ENCODE measurements at regions of chr2 and their contacts with region 1.

Region 1: GRCh38 chr2:169925968-169926367 is 98.7 kb downstream of the UBR3 start:
- DNase-seq: no peak
- ATAC-seq: no peak
- H3K4me3 ChIP-seq: no peak overlapping the region
- H3K27ac ChIP-seq: no peak overlapping the region
- H3K4me1 ChIP-seq: no peaks in the 10 kb centered on the region
- H3K27me3 ChIP-seq: no peaks in the 10 kb centered on the region
- CTCF ChIP-seq: no peak
- POLR2A ChIP-seq: no peak
- RAD21 ChIP-seq: no peak

Region 2: DNA sequence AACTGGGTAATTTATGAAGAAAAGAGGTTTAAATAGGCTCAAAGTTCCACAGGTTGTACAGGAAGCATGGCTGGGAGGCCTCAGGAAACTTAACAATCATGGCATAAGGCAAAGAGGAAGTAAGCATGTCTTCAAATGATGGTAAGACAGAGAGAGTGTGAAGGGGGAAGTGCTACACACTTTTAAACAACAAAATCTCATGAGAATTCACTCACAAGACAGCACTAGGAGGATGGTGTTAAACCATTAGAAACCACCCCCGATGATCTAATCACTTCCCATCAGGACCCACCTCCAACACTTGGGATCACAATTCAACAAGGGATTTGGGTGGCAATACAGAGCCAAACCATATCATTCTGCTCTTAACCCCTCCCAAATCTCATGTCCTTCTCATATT is 266.6 kb before region 1 on chr2:
- CTCF ChIA-PET with region 1: no interaction called
- POLR2A ChIA-PET with region 1: no interaction called
- dilution Hi-C with region 1: no loop called
- in situ Hi-C with region 1: no loop called
- intact Hi-C with region 1: no loop called
- DNase-seq: no peak
- ATAC-seq: no peak
- H3K4me3 ChIP-seq: no peak overlapping the region
- H3K27ac ChIP-seq: no peak overlapping the region
- H3K4me1 ChIP-seq: no peaks in the 10 kb centered on the region
- H3K27me3 ChIP-seq: peaks cover 1% of the 10 kb centered on the region; the same call in 1 of the 2 replicates
- CTCF ChIP-seq: no peak
- POLR2A ChIP-seq: no peak
- RAD21 ChIP-seq: no peak

Region 3: DNA sequence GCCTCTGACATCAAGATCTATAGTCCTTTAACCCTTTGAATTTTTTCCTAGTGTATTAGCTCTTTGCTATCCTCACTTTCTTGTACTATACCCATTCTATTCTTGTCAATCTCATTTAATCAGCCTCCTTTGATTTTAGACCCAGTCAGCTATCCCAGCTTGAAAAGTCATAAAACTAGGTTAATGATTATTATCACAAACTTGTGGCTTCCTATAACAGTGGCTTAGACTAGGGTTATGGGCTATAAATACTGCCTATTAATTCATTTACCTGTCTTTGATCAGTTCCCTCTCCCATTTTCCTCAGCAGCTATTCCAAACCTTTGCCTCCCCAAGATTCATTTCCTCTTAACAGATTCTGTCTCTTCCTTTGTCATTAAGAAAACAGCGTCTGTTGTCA is 76.1 kb after region 1 on chr2:
- CTCF ChIA-PET with region 1: no interaction called
- POLR2A ChIA-PET with region 1: interaction called, 18 read pairs
- dilution Hi-C with region 1: no loop called
- in situ Hi-C with region 1: no loop called
- intact Hi-C with region 1: no loop called
- DNase-seq: no peak
- ATAC-seq: no peak
- H3K4me3 ChIP-seq: no peak overlapping the region
- H3K27ac ChIP-seq: no peak overlapping the region
- H3K4me1 ChIP-seq: no peaks in the 10 kb centered on the region
- H3K27me3 ChIP-seq: no peaks in the 10 kb centered on the region
- CTCF ChIP-seq: no peak
- POLR2A ChIP-seq: no peak
- RAD21 ChIP-seq: no peak